Prostate gland (tissue), 2 donors: ENCODE measurements at regions of chr6 and their contacts with region 1.

Region 1: DNA sequence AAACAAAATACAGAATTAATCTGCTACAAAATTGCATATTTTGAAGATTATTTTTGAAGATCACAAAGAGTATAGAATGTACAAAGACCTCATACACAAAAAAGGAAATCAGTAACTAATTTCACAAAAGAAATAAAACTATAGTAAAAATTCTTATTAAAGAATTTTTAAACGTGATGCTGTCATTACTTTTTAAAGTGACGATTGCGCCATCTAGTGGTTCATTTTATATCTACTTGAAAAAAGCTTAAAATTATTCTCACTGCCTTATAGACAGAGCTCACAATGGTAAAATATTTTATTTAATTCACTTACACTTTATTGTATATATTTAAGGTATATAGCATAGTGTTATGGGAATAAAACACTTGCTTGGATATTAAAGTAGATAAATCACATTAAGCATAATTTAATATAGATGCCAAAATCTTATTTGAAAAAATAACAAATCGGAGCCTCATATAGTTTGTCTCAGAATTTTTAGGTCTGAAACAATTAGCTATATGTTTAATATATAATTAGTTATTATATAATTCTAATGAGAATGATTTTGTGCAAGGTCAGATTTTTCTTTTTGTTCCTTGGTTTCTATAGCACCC is 128.8 kb downstream of the PHF3 start:
- DNase-seq: no peak
- H3K4me3 ChIP-seq: no peak overlapping the region
- H3K27ac ChIP-seq: no peak overlapping the region
- H3K4me1 ChIP-seq: no peaks in the 10 kb centered on the region
- H3K27me3 ChIP-seq: no peaks in the 10 kb centered on the region
- CTCF ChIP-seq: peak; percentile 24 to 94 (median 58)
- POLR2A ChIP-seq: no peak

Region 2: DNA sequence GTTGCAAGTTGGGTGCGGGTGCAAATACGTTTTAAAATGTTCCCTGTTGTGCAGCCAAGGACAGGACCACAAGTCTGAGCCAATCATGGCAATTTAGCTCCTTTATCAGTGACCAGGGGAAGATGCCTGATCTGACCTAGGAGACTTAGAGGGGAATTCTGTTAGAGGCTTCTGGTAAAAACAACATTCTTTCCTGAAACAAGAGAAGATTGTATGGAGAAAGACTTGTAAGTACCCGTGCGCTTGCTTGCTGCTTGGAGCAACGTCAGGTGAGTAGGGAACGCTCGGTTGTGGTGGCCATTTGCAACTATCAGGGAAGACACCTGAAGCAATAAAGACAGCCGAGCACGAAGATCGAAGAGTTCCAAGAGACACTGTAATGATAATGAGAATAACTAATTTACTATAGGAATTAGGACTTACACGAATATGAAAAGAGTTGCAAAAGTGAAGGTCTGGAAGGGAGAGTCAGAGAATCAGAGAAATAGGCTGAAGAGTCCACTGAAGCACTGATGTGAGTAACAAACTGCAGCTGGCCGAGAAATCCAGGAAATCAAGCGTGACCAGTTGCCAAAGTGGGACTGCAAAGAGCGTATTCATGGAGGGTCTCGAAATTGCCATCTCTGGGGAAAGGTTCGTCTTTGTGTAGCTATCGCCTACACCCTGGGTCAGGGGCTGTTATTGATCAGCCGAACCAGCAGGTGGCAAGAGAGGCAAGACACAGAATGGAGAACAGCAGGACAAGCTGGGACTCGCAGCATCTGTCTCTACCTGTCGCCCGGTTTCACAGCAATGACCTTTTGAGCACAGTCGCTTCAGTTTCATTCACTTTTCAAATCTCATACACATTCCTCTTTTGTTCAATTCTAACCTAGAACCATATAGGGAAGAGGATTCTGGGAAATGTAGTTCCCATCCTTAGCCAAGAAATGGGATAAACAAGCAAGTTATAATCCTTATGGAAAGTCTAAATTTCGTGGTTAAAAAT is 166.1 kb before region 1 on chr6:
- intact Hi-C with region 1: loop called (anchors 2 kb)
- DNase-seq: peak; percentile 60
- H3K4me3 ChIP-seq: peak overlapping the region; percentile 26 to 29
- H3K27ac ChIP-seq: no peak overlapping the region
- H3K4me1 ChIP-seq: no peaks in the 10 kb centered on the region
- H3K27me3 ChIP-seq: no peaks in the 10 kb centered on the region
- CTCF ChIP-seq: peak; percentile 58 to 87 (median 74)
- POLR2A ChIP-seq: no peak